HepG2 (cell line): ENCODE measurements at regions of chr6 and their contacts with region 1.

Region 1: DNA sequence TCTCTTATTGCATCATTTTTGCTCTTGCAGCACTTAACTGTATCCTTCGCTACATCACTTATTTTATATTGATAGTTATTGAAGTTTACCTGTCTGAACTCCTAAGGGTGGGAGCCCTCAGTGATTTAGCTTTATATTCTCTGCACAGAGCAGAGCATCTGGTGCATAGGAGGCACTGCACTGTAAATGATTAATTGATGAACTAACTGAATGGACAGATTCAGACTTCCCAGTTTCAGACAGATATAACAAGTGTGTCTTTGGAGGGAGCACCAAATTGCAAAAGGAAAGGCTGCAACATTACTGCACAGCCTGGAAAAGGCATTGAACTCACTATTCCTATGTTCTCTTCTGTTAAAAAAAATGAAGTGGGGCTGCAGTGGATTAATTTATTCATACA is 160.3 kb downstream of the EDN1 start:
- DNase-seq: no peak
- ATAC-seq: no peak; the same call in 2 of the 3 replicates
- H3K4me3 ChIP-seq: no peak overlapping the region
- H3K27ac ChIP-seq: no peak overlapping the region
- H3K4me1 ChIP-seq: no peaks in the 10 kb centered on the region
- H3K27me3 ChIP-seq: no peaks in the 10 kb centered on the region
- CTCF ChIP-seq: no peak
- EP300 ChIP-seq: no peak
- POLR2A ChIP-seq: no peak
- RAD21 ChIP-seq: no peak

Region 2: GRCh38 chr6:10659699-10660348 is 1790.6 kb before region 1 on chr6:
- CTCF ChIA-PET with region 1: no interaction called
- POLR2A ChIA-PET with region 1: no interaction called
- in situ Hi-C with region 1: no loop called
- intact Hi-C with region 1: loop called (anchors 5 kb)
- DNase-seq: no peak
- ATAC-seq: peak; percentile 34; the same call in 2 of the 3 replicates
- H3K4me3 ChIP-seq: no peak overlapping the region
- H3K27ac ChIP-seq: no peak overlapping the region
- H3K4me1 ChIP-seq: 0 out of 2 replicates have a peak, but pooled peaks cover 6% of the 10 kb centered on the region
- H3K27me3 ChIP-seq: peaks cover 0 to 12% of the 10 kb centered on the region in 2 experiments; a peak in 3 of 5 replicates
- CTCF ChIP-seq: no peak
- EP300 ChIP-seq: no peak
- POLR2A ChIP-seq: no peak
- RAD21 ChIP-seq: no peak

Region 3: DNA sequence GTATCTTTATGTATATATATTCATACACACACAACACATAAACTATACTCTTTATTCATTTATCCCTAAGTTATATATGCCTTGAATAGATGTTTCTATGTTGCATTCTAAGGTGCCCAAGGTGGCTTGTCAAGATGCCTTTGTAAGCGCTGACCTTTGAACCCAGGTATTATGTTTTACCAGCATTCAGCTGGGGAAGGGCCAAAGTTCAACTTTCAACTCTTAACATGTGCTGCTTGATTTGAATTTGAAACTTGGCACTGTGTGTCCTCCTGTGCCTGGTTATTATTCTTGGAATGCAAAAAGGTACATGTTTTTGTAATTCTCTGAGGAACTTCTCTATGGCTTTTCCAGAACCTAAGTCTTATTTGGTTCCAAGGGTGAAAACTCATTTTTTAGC is 13.8 kb before region 1 on chr6:
- CTCF ChIA-PET with region 1: no interaction called
- POLR2A ChIA-PET with region 1: no interaction called
- in situ Hi-C with region 1: no loop called
- intact Hi-C with region 1: no loop called
- DNase-seq: peak; percentile 28
- ATAC-seq: no peak
- H3K4me3 ChIP-seq: no peak overlapping the region
- H3K27ac ChIP-seq: no peak overlapping the region
- H3K4me1 ChIP-seq: peaks cover 13% of the 10 kb centered on the region
- H3K27me3 ChIP-seq: no peaks in the 10 kb centered on the region
- CTCF ChIP-seq: no peak
- EP300 ChIP-seq: no peak
- POLR2A ChIP-seq: no peak
- RAD21 ChIP-seq: no peak